Right cardiac atrium (tissue), 5 donors: ENCODE measurements at regions of chr11 and their contacts with region 1.

Region 1: DNA sequence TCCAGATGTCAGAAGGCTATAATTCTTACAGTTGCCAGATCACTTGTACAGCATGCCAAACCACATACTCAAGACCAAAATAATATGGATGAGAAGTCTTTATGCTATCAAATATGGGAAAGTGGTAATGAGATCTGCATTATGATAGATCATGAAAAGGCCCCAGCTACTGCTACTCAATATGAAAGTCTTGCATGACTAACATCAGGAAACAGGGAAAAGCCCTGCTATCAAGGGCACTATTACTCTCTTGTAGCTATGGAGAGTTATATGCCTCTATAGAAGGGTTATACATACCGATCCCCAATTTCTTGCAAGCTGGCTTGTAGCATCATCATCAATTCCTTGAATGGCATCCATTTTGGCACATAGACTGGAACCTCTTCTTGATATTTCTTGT is 30.2 kb upstream of the TMPRSS5 start:
- DNase-seq: no peak
- ATAC-seq: no peak
- H3K4me3 ChIP-seq: no peak overlapping the region
- H3K27ac ChIP-seq: no peak overlapping the region
- H3K4me1 ChIP-seq: no peaks in the 10 kb centered on the region
- H3K27me3 ChIP-seq: no peaks in the 10 kb centered on the region

Region 2: GRCh38 chr11:113305440-113306336 is 430.6 kb before region 1 on chr11:
- intact Hi-C with region 1: loop called (anchors 5 kb)
- DNase-seq: peak; percentile 80 to 94 (median 89)
- ATAC-seq: peak; percentile 89
- H3K4me3 ChIP-seq: no peak overlapping the region
- H3K27ac ChIP-seq: no peak overlapping the region
- H3K4me1 ChIP-seq: no peaks in the 10 kb centered on the region
- H3K27me3 ChIP-seq: no peaks in the 10 kb centered on the region

Region 3: DNA sequence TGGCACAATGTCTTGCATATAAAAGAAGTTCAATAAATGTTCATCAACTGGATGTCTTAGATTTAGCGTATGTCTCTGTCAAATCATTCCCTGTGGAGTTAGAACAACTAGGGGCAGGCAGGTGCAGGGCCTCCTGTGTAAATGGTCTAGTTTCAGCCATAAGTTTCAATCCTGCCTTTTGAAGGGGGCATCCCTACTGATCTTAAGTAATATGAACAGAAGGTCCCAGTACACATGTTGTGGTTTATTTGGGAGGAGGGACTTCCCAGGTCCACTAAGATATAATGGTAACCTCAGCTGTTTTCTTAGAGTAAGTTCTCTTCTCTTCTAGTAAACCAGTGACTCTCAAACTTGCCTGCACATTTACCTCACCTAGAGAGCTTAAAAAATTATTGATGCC is 402.1 kb before region 1 on chr11:
- intact Hi-C with region 1: loop called in 1 of 4 experiments (anchors 10 kb)
- DNase-seq: no peak
- ATAC-seq: no peak
- H3K4me3 ChIP-seq: no peak overlapping the region
- H3K27ac ChIP-seq: no peak overlapping the region
- H3K4me1 ChIP-seq: no peaks in the 10 kb centered on the region
- H3K27me3 ChIP-seq: no peaks in the 10 kb centered on the region